ENCODE measurements at regions of chr3 and their contacts with region 1.

Region 1: GRCh38 chr3:99172736-99173657 is 271.5 kb upstream of the DCBLD2 start:
- DNase-seq: peak; percentile 26 to 67
- ATAC-seq: peak; percentile 86 to 91; a peak in 5 of 6 replicates
- H3K4me3 ChIP-seq: no peak overlapping the region
- H3K27ac ChIP-seq: no peak overlapping the region
- H3K4me1 ChIP-seq: no peaks in the 10 kb centered on the region
- CTCF ChIP-seq: peak; percentile 79
- EP300 ChIP-seq: no peak
- POLR2A ChIP-seq: no peak
- RAD21 ChIP-seq: peak; percentile 72 to 77

Region 2: DNA sequence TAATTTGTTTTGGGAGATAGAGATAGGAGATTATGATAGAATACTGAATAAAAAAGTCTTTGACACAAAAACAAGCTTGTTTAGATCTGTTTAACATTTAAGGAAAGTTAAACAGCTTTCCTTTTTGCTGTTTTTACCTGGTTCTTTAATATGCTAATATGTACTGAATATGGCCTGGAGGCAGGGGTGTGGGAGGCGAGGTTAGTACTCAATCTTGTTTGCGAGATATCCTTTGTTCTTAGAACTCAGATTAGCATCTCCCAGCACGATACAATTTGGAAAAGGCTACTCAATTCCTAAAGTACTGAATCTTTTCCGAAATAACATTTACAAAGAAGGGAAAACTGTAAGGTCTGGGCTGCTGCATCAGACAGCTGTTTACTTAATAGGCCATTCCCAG is 450.6 kb before region 1 on chr3:
- CTCF ChIA-PET with region 1: no interaction called
- POLR2A ChIA-PET with region 1: no interaction called
- DNase-seq: no peak
- ATAC-seq: no peak
- H3K4me3 ChIP-seq: no peak overlapping the region
- H3K27ac ChIP-seq: no peak overlapping the region
- H3K4me1 ChIP-seq: no peaks in the 10 kb centered on the region
- CTCF ChIP-seq: no peak
- EP300 ChIP-seq: no peak
- POLR2A ChIP-seq: no peak
- RAD21 ChIP-seq: no peak

Region 3: GRCh38 chr3:99023590-99024192 is 149.3 kb before region 1 on chr3:
- CTCF ChIA-PET with region 1: interaction called, 39 read pairs
- POLR2A ChIA-PET with region 1: no interaction called
- DNase-seq: peak; percentile 23 to 41
- ATAC-seq: peak in 1 of 2 experiments; percentile 54; a peak in 1 of 6 replicates
- H3K4me3 ChIP-seq: no peak overlapping the region
- H3K27ac ChIP-seq: no peak overlapping the region
- H3K4me1 ChIP-seq: no peaks in the 10 kb centered on the region
- CTCF ChIP-seq: peak; percentile 80
- EP300 ChIP-seq: no peak
- POLR2A ChIP-seq: no peak
- RAD21 ChIP-seq: peak; percentile 75 to 81

Region 4: DNA sequence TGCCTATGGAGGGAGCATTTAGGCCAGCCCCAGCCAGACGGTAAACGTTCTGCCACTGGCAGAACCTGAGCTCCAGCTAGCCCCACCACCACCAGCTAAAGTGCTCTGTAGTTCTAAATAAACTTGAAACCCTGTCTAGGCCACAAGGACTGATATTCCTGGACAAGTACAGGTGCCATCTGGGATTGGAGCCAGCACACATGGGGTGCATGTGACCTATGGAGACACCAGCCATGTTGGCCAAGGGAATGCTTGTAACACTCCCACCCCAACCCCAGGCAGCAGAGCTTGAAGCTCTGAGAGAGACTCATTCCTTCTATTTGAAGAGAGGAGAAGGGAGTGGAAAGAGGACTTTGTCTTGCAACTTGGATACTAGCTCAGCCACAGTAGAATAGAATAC is 13.0 kb after region 1 on chr3:
- CTCF ChIA-PET with region 1: interaction called, 28 read pairs
- POLR2A ChIA-PET with region 1: no interaction called
- DNase-seq: no peak
- ATAC-seq: no peak
- H3K4me3 ChIP-seq: no peak overlapping the region
- H3K27ac ChIP-seq: no peak overlapping the region
- H3K4me1 ChIP-seq: no peaks in the 10 kb centered on the region
- CTCF ChIP-seq: no peak
- EP300 ChIP-seq: no peak
- POLR2A ChIP-seq: no peak
- RAD21 ChIP-seq: no peak

Region 5: DNA sequence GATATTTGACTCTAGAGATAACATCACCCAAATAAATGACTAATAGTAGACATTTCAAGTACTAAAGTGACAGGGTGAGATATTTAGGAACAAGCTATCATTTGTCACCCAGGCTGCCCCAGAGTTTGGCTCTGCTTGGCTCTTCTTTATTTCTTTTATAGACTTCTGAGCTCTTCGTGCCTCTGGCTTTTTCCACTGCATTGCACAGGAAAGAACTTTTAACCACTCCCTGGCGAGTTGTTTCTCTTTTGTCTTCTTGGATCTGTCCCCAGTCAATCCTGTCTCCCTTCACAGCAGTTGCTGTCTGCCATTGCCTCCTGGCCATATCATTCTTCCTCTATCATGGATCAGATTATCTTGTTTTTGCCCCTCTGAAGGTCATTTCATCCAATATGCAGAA is 67.7 kb after region 1 on chr3:
- CTCF ChIA-PET with region 1: no interaction called
- POLR2A ChIA-PET with region 1: no interaction called
- DNase-seq: no peak
- ATAC-seq: no peak
- H3K4me3 ChIP-seq: no peak overlapping the region
- H3K27ac ChIP-seq: no peak overlapping the region
- H3K4me1 ChIP-seq: no peaks in the 10 kb centered on the region
- CTCF ChIP-seq: no peak
- EP300 ChIP-seq: no peak
- POLR2A ChIP-seq: no peak
- RAD21 ChIP-seq: no peak

Measured in A549 (cell line).